Calu3 (cell line): ENCODE measurements at regions of chr18 and their contacts with region 1.

Region 1: DNA sequence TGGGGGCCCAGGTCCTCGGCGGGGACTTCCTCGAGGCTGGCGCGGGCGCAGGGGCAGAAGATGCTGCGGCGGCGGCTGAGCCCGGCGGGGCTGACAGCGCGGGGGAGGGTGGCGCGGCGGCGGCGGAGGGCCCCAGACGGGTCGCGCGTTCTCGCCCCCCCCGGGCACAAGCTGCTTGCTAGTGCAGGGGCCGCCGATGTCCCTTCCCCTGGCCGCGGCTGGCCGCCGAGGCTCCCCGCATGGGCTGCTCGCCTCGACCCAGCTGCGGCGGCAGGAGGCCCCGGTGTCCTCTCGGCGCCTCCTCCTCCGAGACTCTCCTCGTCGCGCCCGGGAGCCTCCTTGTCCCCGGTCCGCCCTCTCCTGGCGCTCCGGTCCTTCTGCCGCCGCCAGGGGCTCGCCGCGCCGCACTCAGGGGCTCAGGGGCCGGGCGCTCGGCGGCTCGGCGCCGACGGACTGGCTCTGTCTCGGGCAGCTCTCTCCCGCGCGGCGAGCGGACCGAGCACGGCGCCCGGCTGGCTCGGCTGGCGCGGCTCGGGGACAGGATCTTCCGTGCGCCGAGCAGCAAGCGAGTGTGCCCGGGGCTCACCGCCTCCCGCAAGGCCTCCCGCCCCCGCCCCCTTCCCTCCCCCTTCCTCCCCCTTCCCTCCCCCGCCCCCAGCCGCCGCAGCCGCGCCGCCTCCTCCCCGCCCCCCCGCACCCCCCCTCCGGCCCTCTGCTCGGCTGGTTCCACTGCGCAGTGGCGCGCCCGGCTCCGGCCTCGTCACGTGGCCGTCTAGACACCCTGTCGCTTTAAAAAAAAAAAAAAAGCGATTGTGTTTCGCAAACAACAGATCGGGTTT is 902 bp upstream of the SMAD7 start:
- DNase-seq: peak; percentile 82
- H3K4me3 Mint-ChIP-seq: peak overlapping the region; percentile 77
- H3K27ac Mint-ChIP-seq: peak overlapping the region; percentile 75
- H3K4me1 Mint-ChIP-seq: peaks cover 52% of the 10 kb centered on the region
- H3K27me3 Mint-ChIP-seq: no peaks in the 10 kb centered on the region
- CTCF ChIP-seq: peak; percentile 26

Region 2: GRCh38 chr18:48735080-48735676 is 216.5 kb before region 1 on chr18:
- CTCF ChIA-PET with region 1: no interaction called
- intact Hi-C with region 1: no loop called
- DNase-seq: no peak
- H3K4me3 Mint-ChIP-seq: no peak overlapping the region
- H3K27ac Mint-ChIP-seq: no peak overlapping the region
- H3K4me1 Mint-ChIP-seq: peaks cover 10% of the 10 kb centered on the region
- H3K27me3 Mint-ChIP-seq: no peaks in the 10 kb centered on the region
- CTCF ChIP-seq: no peak

Region 3: GRCh38 chr18:48834413-48835031 is 117.1 kb before region 1 on chr18:
- CTCF ChIA-PET with region 1: no interaction called
- intact Hi-C with region 1: loop called (anchors 5 kb)
- DNase-seq: peak; percentile 75
- H3K4me3 Mint-ChIP-seq: peak overlapping the region; percentile 29
- H3K27ac Mint-ChIP-seq: peak overlapping the region; percentile 75
- H3K4me1 Mint-ChIP-seq: peaks cover 40% of the 10 kb centered on the region
- H3K27me3 Mint-ChIP-seq: no peaks in the 10 kb centered on the region
- CTCF ChIP-seq: no peak

Region 4: DNA sequence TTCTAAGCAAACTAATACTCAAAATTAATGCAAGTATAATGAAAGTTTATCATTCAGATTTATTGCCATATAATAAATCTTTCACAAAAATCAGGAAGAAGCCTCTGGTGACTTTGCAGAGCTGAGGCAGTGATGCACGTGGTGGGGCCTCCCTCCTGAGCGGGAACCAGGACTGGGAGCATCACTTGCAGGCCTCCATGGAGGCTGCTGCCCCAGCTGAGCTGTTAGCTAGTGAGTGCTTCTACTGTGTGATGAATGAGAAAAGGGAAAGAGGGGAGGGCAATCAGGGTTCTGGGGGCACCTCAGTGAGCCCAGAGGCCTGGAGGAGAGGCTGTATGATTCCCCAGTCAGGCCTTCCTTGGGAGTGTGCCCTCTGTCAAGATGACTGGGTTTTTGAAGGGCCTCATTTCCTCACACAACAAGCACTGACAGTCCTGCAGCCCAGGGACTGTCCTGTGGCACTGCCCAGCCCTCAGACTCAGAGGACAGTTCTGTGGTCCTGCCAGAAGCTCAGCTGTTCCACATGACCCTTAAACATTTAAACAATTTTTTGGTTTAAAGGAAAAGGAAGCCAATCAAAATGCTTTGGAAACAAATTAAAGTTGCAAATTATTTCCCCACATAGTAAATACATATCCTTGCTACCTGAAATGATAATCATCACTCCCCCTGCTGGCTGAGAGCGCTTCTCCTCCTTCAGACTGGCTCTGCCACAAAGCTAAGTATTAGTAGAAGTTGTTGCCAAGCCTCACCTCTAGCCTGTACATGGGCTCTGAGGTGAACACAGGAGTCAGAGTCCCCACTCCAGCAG is 90.0 kb after region 1 on chr18:
- CTCF ChIA-PET with region 1: interaction called, 4 read pairs
- intact Hi-C with region 1: loop called (anchors 2 kb)
- DNase-seq: peak; percentile 70
- H3K4me3 Mint-ChIP-seq: no peak overlapping the region
- H3K27ac Mint-ChIP-seq: no peak overlapping the region
- H3K4me1 Mint-ChIP-seq: no peaks in the 10 kb centered on the region
- H3K27me3 Mint-ChIP-seq: no peaks in the 10 kb centered on the region
- CTCF ChIP-seq: peak; percentile 71

Region 5: GRCh38 chr18:49178736-49179135 is 227.1 kb after region 1 on chr18:
- CTCF ChIA-PET with region 1: no interaction called
- intact Hi-C with region 1: loop called (anchors 10 kb)
- DNase-seq: peak; percentile 42
- H3K4me3 Mint-ChIP-seq: no peak overlapping the region
- H3K27ac Mint-ChIP-seq: no peak overlapping the region
- H3K4me1 Mint-ChIP-seq: peaks cover 12% of the 10 kb centered on the region
- H3K27me3 Mint-ChIP-seq: no peaks in the 10 kb centered on the region
- CTCF ChIP-seq: peak; percentile 70

Region 6: GRCh38 chr18:49500201-49500921 is 548.7 kb after region 1 on chr18:
- CTCF ChIA-PET with region 1: no interaction called
- intact Hi-C with region 1: no loop called
- DNase-seq: no peak
- H3K4me3 Mint-ChIP-seq: no peak overlapping the region
- H3K27ac Mint-ChIP-seq: no peak overlapping the region
- H3K4me1 Mint-ChIP-seq: no peaks in the 10 kb centered on the region
- H3K27me3 Mint-ChIP-seq: no peaks in the 10 kb centered on the region
- CTCF ChIP-seq: no peak